Caco-2 (cell line): ENCODE measurements at regions of chr6 and their contacts with region 1.

Region 1: DNA sequence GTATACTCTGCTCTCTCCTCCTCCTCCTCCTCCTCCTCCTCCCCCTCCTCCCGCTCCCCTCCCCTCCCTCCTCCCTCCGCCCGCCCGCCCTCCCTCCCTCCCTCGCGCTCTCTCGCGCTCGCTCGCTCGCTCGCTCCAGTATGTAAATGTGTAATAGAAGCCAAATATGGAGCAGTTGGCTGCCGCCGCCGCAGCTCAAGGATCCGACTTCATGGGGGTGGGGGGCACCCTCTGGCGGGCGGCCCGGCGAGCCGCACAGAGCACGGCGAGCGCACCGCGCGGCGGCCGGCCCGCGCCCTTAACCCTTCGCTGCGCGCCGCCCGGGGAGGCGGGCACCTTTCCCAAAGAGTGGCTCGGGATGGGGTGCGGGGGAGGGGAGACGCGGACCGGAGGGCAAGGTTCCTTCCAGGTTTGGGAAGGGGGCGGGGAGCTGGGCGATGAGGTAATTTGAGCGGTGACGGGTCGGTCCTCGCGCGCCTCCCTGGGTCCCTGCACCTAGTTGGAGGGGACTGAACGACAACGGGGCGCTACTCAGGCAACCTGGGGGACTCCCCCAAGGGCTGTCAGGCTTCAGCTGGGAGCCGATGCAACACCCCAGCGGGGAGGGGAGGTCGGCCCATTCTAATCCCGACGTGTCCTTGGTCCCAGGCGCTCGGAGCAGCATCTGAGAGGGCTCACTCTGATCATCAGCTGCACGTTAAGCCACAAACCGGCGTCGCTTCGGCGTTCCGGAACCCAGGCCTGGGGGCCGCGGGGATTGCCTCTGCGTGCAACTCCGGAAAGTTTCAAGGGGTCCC is 409 bp upstream of the ATXN1 start:
- DNase-seq: peak; percentile 92 to 93
- H3K4me3 ChIP-seq: peak overlapping the region; percentile 75
- H3K4me3 Mint-ChIP-seq: peak overlapping the region; percentile 100
- H3K27ac Mint-ChIP-seq: peak overlapping the region; percentile 61
- H3K4me1 ChIP-seq: peaks cover 20% of the 10 kb centered on the region; the same call in 1 of the 2 replicates
- H3K4me1 Mint-ChIP-seq: peaks cover 18% of the 10 kb centered on the region
- H3K27me3 ChIP-seq: no peaks in the 10 kb centered on the region
- H3K27me3 Mint-ChIP-seq: no peaks in the 10 kb centered on the region
- CTCF ChIP-seq: peak; percentile 15 to 38

Region 2: DNA sequence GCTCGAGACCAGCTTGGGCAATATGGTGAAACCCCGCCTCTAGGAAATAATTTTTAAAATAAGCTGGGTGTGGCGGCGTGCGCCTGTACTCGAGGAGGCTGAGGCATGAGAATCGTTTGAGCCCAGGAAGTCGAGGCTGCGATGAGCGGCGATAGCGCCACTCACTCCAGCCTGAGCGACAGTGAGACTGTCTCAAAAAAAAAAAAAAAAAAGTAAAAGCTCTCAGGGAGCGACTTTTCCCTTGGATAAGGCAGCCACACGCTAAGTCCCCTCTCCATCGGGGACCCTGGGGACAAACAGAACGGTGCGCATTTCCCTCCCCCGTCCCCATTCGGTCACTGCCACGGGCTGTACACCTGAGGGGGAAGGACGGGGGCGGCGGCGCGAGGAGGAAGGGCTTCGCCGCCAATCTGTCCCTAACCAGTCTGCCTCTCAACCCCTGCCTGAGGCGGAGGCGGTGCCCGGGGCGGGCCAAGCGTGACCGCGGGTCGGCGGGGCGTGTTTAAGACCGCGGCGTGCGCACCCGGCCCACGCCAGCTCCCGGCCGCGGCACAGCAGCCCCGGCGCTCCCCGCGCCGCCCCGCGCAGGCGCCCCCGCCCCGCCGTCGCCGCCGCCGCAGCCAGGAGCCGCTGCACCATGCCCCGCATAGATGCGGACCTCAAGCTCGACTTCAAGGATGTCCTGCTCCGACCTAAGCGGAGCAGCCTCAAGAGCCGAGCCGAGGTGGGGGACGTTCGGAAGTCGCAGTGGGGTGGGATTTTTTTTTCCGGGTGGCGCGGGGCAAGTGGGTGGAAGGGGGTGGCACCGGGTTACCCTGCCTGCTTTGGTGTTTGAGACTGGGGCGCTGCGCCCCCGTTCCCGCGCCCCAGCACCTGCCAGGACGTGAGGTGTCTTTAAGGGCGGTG is 523.4 kb before region 1 on chr6 and contains the start of gene GMPR:
- CTCF ChIA-PET with region 1: no interaction called
- POLR2A ChIA-PET with region 1: no interaction called
- intact Hi-C with region 1: no loop called
- DNase-seq: peak; percentile 63 to 66
- H3K4me3 ChIP-seq: peak within 1 kb of the TSS; percentile 57
- H3K4me3 Mint-ChIP-seq: peak within 1 kb of the TSS; percentile 91
- H3K27ac Mint-ChIP-seq: peak within 1 kb of the TSS; percentile 27
- H3K4me1 ChIP-seq: peaks cover 5% of the 10 kb centered on the region
- H3K4me1 Mint-ChIP-seq: no peaks in the 10 kb centered on the region
- H3K27me3 ChIP-seq: no peaks in the 10 kb centered on the region
- H3K27me3 Mint-ChIP-seq: peaks cover 8% of the 10 kb centered on the region
- CTCF ChIP-seq: no peak
- total RNA-seq, gene GMPR: 1.1 and 1.3 TPM in 2 replicates

Region 3: DNA sequence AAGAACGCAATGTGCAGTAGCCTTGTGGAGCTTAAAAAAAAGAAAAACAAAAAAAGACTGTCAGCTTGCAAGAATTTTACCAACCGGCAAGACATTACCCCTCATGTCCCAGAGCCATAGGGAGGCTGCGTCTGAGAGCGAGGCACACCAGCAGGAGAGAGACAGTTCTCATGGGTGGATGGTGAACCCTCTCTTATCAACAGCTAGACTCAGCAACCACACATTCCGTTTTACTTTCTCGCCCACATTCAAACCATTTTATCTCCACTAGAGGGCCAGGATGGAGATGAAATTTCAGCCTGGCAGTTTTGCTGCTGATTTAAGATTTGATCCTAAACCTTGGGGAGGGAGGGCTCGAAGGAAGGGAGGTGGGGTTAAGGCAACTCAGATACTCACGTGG is 247.4 kb before region 1 on chr6:
- CTCF ChIA-PET with region 1: interaction called, 12 read pairs
- POLR2A ChIA-PET with region 1: no interaction called
- intact Hi-C with region 1: loop called (anchors 1 kb)
- DNase-seq: peak in 1 of 2 experiments; percentile 36
- H3K4me3 ChIP-seq: no peak overlapping the region
- H3K4me3 Mint-ChIP-seq: no peak overlapping the region
- H3K27ac Mint-ChIP-seq: no peak overlapping the region
- H3K4me1 ChIP-seq: no peaks in the 10 kb centered on the region
- H3K4me1 Mint-ChIP-seq: peaks cover 12% of the 10 kb centered on the region
- H3K27me3 ChIP-seq: no peaks in the 10 kb centered on the region
- H3K27me3 Mint-ChIP-seq: no peaks in the 10 kb centered on the region
- CTCF ChIP-seq: peak; percentile 40 to 69

Region 4: DNA sequence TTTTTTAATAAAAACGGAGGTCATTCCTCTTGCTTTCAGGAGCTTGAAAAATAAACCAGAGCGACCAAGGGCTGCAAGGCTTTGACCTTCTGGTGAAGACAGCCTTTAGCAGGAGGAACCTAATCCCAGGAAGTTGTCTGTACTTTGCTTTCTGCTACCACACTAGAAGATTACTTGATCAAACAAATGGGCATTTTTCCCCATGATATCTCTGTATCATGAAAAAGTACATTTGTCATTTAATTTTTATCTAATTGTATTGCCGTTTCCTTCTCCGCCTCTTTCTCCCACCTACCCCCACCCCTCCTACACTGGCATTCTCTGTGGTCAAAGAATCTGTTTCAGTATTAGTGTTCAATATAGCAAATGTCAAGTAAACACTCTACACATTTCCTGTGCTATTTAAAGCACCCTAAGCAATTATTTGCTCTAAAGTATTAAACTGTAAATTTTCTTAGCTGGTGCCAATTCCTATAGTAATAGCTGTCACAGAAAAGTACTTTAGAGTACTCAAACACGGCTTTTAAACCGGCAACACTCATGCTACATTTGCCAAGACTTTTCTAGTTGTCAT is 30.1 kb before region 1 on chr6:
- CTCF ChIA-PET with region 1: interaction called, 10 read pairs
- POLR2A ChIA-PET with region 1: no interaction called
- intact Hi-C with region 1: loop called (anchors 2 kb)
- DNase-seq: no peak
- H3K4me3 ChIP-seq: no peak overlapping the region
- H3K4me3 Mint-ChIP-seq: peak overlapping the region; percentile 52
- H3K27ac Mint-ChIP-seq: no peak overlapping the region
- H3K4me1 ChIP-seq: peaks cover 27% of the 10 kb centered on the region
- H3K4me1 Mint-ChIP-seq: peaks cover 31% of the 10 kb centered on the region
- H3K27me3 ChIP-seq: no peaks in the 10 kb centered on the region
- H3K27me3 Mint-ChIP-seq: no peaks in the 10 kb centered on the region
- CTCF ChIP-seq: no peak

Region 5: DNA sequence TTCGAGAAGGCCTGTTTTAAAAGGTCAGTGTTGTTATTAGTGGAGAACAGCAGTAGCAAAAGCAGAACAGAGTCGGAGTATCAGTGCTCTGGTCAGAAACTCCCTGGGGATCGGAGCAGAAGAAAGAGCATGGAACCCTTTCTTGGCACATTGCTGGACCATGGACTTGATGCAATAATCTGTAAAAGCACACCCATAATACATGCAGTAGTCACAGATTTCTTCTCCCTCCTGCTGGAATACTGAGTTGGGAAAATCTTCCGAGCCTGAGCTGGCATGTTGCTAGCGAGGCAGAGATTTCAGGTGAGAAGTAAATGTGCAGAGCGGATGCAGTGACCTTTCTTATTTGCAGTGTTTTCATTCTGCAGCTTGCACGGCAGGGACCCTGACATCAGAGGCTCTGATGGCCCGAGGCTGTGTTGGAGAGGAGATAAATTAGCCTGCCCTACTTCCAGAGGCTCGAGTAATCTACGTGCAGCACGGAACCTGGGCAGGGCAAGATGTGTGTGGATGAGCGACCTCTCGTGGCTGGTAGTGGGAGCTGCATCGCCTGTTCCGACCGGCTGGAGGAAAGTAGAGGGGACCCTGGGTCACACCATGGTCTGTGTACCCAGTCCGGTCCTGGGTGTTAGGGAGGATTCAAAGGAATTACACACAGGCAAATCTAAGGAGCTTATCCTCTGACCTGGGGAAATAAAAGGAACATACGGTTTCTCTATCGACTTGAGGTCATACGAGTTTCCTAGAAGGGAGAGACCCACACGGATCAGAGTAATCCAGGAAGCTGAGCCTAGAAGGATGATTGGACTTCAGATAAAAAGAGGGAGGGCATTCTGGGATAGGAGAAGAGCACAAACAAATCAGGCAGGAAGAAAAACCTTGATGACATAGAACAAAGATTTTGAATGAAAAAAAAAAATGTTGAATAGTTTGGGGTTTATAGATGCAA is 203.2 kb after region 1 on chr6:
- CTCF ChIA-PET with region 1: no interaction called
- POLR2A ChIA-PET with region 1: no interaction called
- intact Hi-C with region 1: loop called (anchors 2 kb)
- DNase-seq: peak; percentile 68 to 75
- H3K4me3 ChIP-seq: no peak overlapping the region
- H3K4me3 Mint-ChIP-seq: no peak overlapping the region
- H3K27ac Mint-ChIP-seq: no peak overlapping the region
- H3K4me1 ChIP-seq: no peaks in the 10 kb centered on the region
- H3K4me1 Mint-ChIP-seq: peaks cover 7% of the 10 kb centered on the region
- H3K27me3 ChIP-seq: no peaks in the 10 kb centered on the region; the same call in none of the 2 replicates
- H3K27me3 Mint-ChIP-seq: peaks cover 18% of the 10 kb centered on the region
- CTCF ChIP-seq: peak; percentile 65 to 88